HCT116 (cell line): ENCODE measurements at regions of chr16 and their contacts with region 1.

Region 1: GRCh38 chr16:48623304-48624016 is 13.5 kb upstream of the N4BP1 start:
- DNase-seq: peak; percentile 46
- ATAC-seq: peak; percentile 98
- H3K4me3 ChIP-seq: peak overlapping the region; percentile 43 to 56
- H3K27ac ChIP-seq: peak overlapping the region; percentile 36; the same call in 1 of the 2 replicates
- H3K4me1 ChIP-seq: peaks cover 3 to 10% of the 10 kb centered on the region in 2 experiments; a peak in 2 of 4 replicates
- H3K27me3 ChIP-seq: no peaks in the 10 kb centered on the region
- CTCF ChIP-seq: peak; percentile 77 to 98 (median 95)
- POLR2A ChIP-seq: no peak
- RAD21 ChIP-seq: peak; percentile 90

Region 2: GRCh38 chr16:46947900-46948547 is 1675.4 kb before region 1 on chr16:
- CTCF ChIA-PET with region 1: no interaction called
- POLR2A ChIA-PET with region 1: no interaction called
- RAD21 ChIA-PET with region 1: no interaction called
- intact Hi-C with region 1: loop called (anchors 10 kb)
- DNase-seq: peak; percentile 29
- ATAC-seq: peak; percentile 90
- H3K4me3 ChIP-seq: no peak overlapping the region
- H3K27ac ChIP-seq: no peak overlapping the region
- H3K4me1 ChIP-seq: no peaks in the 10 kb centered on the region
- H3K27me3 ChIP-seq: no peaks in the 10 kb centered on the region
- CTCF ChIP-seq: peak; percentile 63 to 75 (median 65)
- POLR2A ChIP-seq: no peak
- RAD21 ChIP-seq: peak; percentile 89

Region 3: GRCh38 chr16:48276102-48276501 is 347.4 kb before region 1 on chr16:
- CTCF ChIA-PET with region 1: no interaction called
- POLR2A ChIA-PET with region 1: no interaction called
- RAD21 ChIA-PET with region 1: no interaction called
- intact Hi-C with region 1: no loop called
- DNase-seq: no peak
- ATAC-seq: no peak
- H3K4me3 ChIP-seq: no peak overlapping the region
- H3K27ac ChIP-seq: no peak overlapping the region
- H3K4me1 ChIP-seq: no peaks in the 10 kb centered on the region
- H3K27me3 ChIP-seq: no peaks in the 10 kb centered on the region
- CTCF ChIP-seq: no peak
- POLR2A ChIP-seq: no peak
- RAD21 ChIP-seq: no peak

Region 4: DNA sequence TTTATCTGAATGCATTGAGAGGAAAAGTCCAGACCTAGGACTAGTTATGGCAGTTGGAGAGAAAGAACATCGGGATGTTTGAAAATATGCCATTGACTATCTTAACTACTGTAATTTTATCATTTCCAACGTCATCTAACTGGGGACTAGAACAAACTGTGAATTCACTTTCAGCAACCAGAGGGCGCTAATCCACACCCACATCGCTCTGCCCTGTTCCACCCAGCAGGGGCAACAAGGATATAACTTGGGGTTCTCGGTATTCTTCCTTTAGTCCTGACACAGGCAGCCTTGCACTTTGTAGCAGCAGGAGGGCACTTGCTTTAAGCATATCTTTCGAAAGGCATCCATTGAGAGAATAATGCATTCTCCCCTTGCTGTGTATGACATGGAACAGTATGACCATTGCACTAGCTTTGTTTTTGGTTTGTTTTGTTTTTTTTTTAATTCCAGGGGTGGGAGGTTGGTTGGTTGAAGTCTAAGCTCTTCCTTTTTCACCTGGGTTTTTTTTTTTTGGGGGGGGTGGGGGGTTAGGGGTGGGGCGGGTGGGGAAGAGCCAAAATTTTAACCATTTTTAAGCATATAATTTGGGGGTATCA is 269.8 kb before region 1 on chr16:
- CTCF ChIA-PET with region 1: interaction called, 12 read pairs
- POLR2A ChIA-PET with region 1: interaction called, 3 read pairs
- RAD21 ChIA-PET with region 1: interaction called in 1 of 2 experiments, 6 read pairs
- intact Hi-C with region 1: loop called (anchors 1 kb)
- DNase-seq: peak; percentile 51
- ATAC-seq: peak; percentile 92
- H3K4me3 ChIP-seq: no peak overlapping the region
- H3K27ac ChIP-seq: no peak overlapping the region
- H3K4me1 ChIP-seq: no peaks in the 10 kb centered on the region; a peak in 1 of 4 replicates
- H3K27me3 ChIP-seq: no peaks in the 10 kb centered on the region
- CTCF ChIP-seq: peak; percentile 90 to 97 (median 92)
- POLR2A ChIP-seq: no peak
- RAD21 ChIP-seq: peak; percentile 79

Region 5: DNA sequence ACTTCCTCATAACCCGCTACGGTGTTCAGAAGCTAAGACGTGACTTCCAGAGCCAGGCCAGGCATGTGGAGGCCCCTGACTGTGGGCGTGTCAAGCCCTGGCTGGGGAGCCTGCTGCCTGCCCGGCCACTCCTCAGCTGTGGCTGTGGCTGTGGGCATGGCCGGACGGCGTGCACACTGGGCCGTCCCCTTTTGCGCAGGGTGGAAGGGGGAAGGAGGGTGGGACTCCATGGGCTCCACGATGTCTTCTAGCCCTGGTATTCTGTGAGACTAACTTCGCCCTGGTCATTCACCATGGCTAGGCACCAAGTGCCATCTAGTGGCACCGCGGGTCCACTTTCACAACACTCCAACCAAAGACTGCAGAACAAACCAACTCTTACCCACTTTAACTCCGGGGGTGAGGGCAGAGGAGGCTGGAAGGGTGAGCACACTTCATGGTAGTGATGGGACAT is 81.4 kb before region 1 on chr16:
- CTCF ChIA-PET with region 1: interaction called, 4 read pairs
- POLR2A ChIA-PET with region 1: no interaction called
- RAD21 ChIA-PET with region 1: no interaction called
- intact Hi-C with region 1: loop called (anchors 10 kb)
- DNase-seq: no peak
- ATAC-seq: peak; percentile 86
- H3K4me3 ChIP-seq: no peak overlapping the region
- H3K27ac ChIP-seq: no peak overlapping the region
- H3K4me1 ChIP-seq: no peaks in the 10 kb centered on the region
- H3K27me3 ChIP-seq: no peaks in the 10 kb centered on the region
- CTCF ChIP-seq: peak in 2 of 3 experiments; percentile 49 to 57; a peak in 5 of 6 replicates
- POLR2A ChIP-seq: no peak
- RAD21 ChIP-seq: peak; percentile 64

Region 6: GRCh38 chr16:48574133-48574532 is 49.3 kb before region 1 on chr16:
- CTCF ChIA-PET with region 1: no interaction called
- POLR2A ChIA-PET with region 1: no interaction called
- RAD21 ChIA-PET with region 1: no interaction called
- intact Hi-C with region 1: no loop called
- DNase-seq: no peak
- ATAC-seq: no peak
- H3K4me3 ChIP-seq: no peak overlapping the region
- H3K27ac ChIP-seq: no peak overlapping the region
- H3K4me1 ChIP-seq: peaks cover 0 to 8% of the 10 kb centered on the region in 2 experiments; a peak in 1 of 4 replicates
- H3K27me3 ChIP-seq: no peaks in the 10 kb centered on the region
- CTCF ChIP-seq: no peak
- POLR2A ChIP-seq: no peak
- RAD21 ChIP-seq: no peak

Region 7: GRCh38 chr16:48609652-48610029 is 13.8 kb before region 1 on chr16:
- CTCF ChIA-PET with region 1: interaction called, 10 read pairs
- POLR2A ChIA-PET with region 1: interaction called, 3 read pairs
- RAD21 ChIA-PET with region 1: no interaction called
- intact Hi-C with region 1: no loop called
- DNase-seq: no peak
- ATAC-seq: peak; percentile 74
- H3K4me3 ChIP-seq: peak overlapping the region; percentile 95 to 97
- H3K27ac ChIP-seq: peak overlapping the region; percentile 95
- H3K4me1 ChIP-seq: peaks cover 14 to 29% of the 10 kb centered on the region in 2 experiments
- H3K27me3 ChIP-seq: no peaks in the 10 kb centered on the region
- CTCF ChIP-seq: no peak
- POLR2A ChIP-seq: no peak
- RAD21 ChIP-seq: no peak